Activated B cell treated with CpG ODN at 0.5 μM for 24 hours (primary cell): ENCODE measurements at regions of chr3 and their contacts with region 1.

Region 1: GRCh38 chr3:184229394-184230080 is at the start of gene VWA5B2:
- DNase-seq: peak; percentile 79
- ATAC-seq: peak; percentile 97
- H3K4me3 Mint-ChIP-seq: peak within 1 kb of the TSS; percentile 77
- H3K27ac Mint-ChIP-seq: no peak within 1 kb of the TSS
- H3K4me1 Mint-ChIP-seq: peaks cover 15% of the 10 kb centered on the region
- H3K27me3 Mint-ChIP-seq: peaks cover 45% of the 10 kb centered on the region
- CTCF ChIP-seq: no peak
- total RNA-seq, gene VWA5B2: 0.42 and 0.76 TPM in 2 replicates

Region 2: GRCh38 chr3:184174646-184175492 is 54.7 kb before region 1 on chr3 and contains the start of gene AP2M1:
- CTCF ChIA-PET with region 1: no interaction called
- POLR2A ChIA-PET with region 1: no interaction called
- intact Hi-C with region 1: loop called (anchors 1 kb)
- DNase-seq: peak; percentile 99
- ATAC-seq: peak; percentile 97
- H3K4me3 Mint-ChIP-seq: peak within 1 kb of the TSS; percentile 90
- H3K27ac Mint-ChIP-seq: peak within 1 kb of the TSS; percentile 75
- H3K4me1 Mint-ChIP-seq: peaks cover 37% of the 10 kb centered on the region
- H3K27me3 Mint-ChIP-seq: no peaks in the 10 kb centered on the region
- CTCF ChIP-seq: no peak
- total RNA-seq, gene AP2M1: 169 and 177 TPM in 2 replicates

Region 3: DNA sequence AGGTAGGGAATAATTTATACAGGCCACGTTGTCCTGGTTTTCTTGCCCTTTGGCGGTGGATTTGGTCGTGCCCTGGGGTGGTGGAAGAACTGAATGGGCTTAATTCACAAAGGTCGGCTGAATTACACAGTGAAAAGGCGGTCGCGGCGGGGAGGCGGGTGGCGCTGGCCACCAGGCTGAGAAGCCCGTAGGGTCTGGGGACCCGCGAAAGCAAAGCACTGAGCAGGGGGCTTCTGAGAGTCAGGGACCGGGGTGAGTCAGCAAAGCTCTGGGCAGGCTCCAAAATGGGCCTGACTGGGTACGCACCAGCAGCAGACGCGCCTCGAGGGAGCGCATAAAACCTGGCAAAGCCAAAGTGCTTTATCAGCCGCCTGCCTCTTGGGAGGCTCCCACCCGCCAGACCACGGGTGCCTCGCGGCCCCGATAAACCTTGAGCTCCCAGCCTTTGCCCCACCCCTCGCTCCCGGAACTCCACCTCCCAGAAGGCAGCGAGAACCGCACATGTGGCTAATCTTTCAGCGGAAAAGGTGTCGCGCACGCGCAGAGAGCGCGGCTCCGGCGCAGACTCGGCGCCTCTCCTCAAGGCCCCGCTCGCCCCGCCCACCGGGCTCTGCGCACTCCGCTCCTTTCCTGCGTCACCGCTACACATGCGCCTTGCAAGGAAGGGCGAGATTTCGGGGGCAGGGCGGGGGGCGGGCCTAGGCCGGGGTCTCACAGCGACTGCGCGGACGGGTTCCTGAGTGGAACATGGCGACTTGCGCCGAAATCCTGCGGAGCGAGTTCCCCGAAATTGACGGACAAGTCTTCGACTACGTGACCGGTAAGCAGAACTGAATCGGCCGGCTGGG is 43.9 kb before region 1 on chr3 and contains the start of gene ABCF3:
- CTCF ChIA-PET with region 1: interaction called, 3 read pairs
- POLR2A ChIA-PET with region 1: no interaction called
- intact Hi-C with region 1: loop called (anchors 1 kb)
- DNase-seq: peak; percentile 99
- ATAC-seq: peak; percentile 95
- H3K4me3 Mint-ChIP-seq: peak within 1 kb of the TSS; percentile 99
- H3K27ac Mint-ChIP-seq: peak within 1 kb of the TSS; percentile 93
- H3K4me1 Mint-ChIP-seq: peaks cover 40% of the 10 kb centered on the region
- H3K27me3 Mint-ChIP-seq: no peaks in the 10 kb centered on the region
- CTCF ChIP-seq: no peak
- total RNA-seq, gene ABCF3: 78.0 and 86.7 TPM in 2 replicates

Region 4: DNA sequence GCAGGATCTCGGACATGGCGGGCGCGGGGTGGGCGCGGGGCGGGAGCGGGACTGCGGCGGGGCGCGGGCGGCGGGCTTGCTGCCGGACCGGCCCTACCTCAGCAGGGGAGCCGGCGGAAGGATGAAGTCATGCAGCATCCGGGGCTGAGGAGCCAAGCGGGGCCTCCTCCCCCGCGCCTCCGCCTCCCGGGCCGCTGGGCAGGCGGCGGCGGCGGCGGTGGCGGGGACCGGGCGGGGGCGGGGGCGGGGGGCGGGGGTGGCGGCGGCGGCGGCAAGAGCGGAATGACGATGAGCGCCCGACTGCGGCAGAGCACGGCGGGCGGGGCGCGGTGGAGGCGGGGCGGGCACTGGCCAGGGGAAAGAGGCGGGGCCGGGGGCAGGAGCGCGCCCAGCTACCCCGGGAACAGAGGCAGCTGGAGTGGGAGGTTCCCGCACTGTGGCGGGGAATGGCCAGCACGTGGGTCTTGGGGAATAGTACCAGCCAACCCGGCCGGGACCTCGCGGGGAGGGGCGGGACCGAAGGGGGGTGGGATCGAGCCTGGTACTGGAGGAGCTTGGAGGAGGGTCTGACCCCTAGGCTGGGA is 31.8 kb after region 1 on chr3 and contains the start of gene CAMK2N2:
- CTCF ChIA-PET with region 1: interaction called, 8 read pairs
- POLR2A ChIA-PET with region 1: no interaction called
- intact Hi-C with region 1: loop called (anchors 5 kb)
- DNase-seq: peak; percentile 43
- ATAC-seq: peak; percentile 66
- H3K4me3 Mint-ChIP-seq: peak within 1 kb of the TSS; percentile 79
- H3K27ac Mint-ChIP-seq: no peak within 1 kb of the TSS
- H3K4me1 Mint-ChIP-seq: peaks cover 28% of the 10 kb centered on the region
- H3K27me3 Mint-ChIP-seq: peaks cover 51% of the 10 kb centered on the region
- CTCF ChIP-seq: no peak
- total RNA-seq, gene CAMK2N2: not detected in 2 replicates

Region 5: GRCh38 chr3:184289426-184289938 is 59.9 kb after region 1 on chr3:
- CTCF ChIA-PET with region 1: interaction called, 15 read pairs
- POLR2A ChIA-PET with region 1: no interaction called
- intact Hi-C with region 1: loop called (anchors 1 kb)
- DNase-seq: peak; percentile 30
- ATAC-seq: peak; percentile 65
- H3K4me3 Mint-ChIP-seq: no peak overlapping the region
- H3K27ac Mint-ChIP-seq: no peak overlapping the region
- H3K4me1 Mint-ChIP-seq: peaks cover 3% of the 10 kb centered on the region
- H3K27me3 Mint-ChIP-seq: peaks cover 15% of the 10 kb centered on the region
- CTCF ChIP-seq: no peak

Region 6: GRCh38 chr3:184513276-184514170 is 284.0 kb after region 1 on chr3:
- CTCF ChIA-PET with region 1: interaction called, 3 read pairs
- POLR2A ChIA-PET with region 1: no interaction called
- intact Hi-C with region 1: loop called (anchors 1 kb)
- DNase-seq: peak; percentile 75
- ATAC-seq: peak; percentile 100
- H3K4me3 Mint-ChIP-seq: peak overlapping the region; percentile 57
- H3K27ac Mint-ChIP-seq: no peak overlapping the region
- H3K4me1 Mint-ChIP-seq: peaks cover 11% of the 10 kb centered on the region
- H3K27me3 Mint-ChIP-seq: peaks cover 41% of the 10 kb centered on the region
- CTCF ChIP-seq: no peak

Region 7: GRCh38 chr3:184543843-184544512 is 314.4 kb after region 1 on chr3:
- CTCF ChIA-PET with region 1: no interaction called
- POLR2A ChIA-PET with region 1: no interaction called
- intact Hi-C with region 1: loop called (anchors 5 kb)
- DNase-seq: peak; percentile 56
- ATAC-seq: peak; percentile 85
- H3K4me3 Mint-ChIP-seq: no peak overlapping the region
- H3K27ac Mint-ChIP-seq: no peak overlapping the region
- H3K4me1 Mint-ChIP-seq: peaks cover 12% of the 10 kb centered on the region
- H3K27me3 Mint-ChIP-seq: peaks cover 21% of the 10 kb centered on the region
- CTCF ChIP-seq: peak; percentile 79